CD8-positive, alpha-beta T cell (primary cell): ENCODE measurements at regions of chr7 and their contacts with region 1.

Region 1: DNA sequence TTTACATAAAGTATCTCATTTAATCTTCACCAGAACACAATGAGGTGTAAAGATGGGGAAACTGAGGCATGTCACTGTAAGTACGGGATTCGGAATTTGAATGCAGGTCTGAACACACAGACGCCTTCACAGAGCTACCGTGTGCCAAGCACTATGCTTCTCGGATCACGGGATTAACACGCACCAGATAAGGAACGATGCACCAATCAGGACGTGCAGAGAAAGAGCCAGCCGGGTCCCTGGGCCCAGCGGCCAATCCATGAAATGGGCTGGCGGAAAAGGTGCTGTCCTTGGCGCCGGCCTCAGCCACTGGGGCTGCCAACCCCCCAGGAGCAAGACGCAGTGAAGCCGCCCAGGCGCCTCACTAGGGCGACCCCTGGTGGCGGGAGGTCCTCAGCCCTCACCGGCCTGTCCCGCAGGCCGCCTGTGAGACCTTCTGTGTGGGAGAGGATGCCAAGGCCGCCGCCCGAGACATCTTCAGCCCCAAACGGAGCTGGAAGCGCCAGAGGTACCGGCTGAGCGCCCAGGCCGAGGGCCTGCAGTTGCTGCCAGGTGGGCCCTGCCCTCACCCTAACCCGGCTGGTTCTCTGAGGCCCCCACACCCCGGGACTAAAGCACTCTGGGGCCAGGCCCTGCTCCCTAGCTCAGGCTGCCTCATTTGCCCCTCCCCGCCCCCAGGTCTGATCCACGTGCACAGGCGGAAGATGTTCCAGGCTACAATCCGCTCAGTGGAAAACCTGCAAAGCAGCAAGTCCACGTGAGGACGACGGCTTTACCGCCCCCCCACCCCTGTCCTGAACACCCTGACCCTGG is 15.6 kb downstream of the ATG9B start:
- DNase-seq: peak; percentile 56 to 89 (median 78)
- ATAC-seq: peak; percentile 47
- H3K4me3 ChIP-seq: peak overlapping the region; percentile 31 to 46
- H3K4me3 Mint-ChIP-seq: peak overlapping the region; percentile 82
- H3K27ac ChIP-seq: peak overlapping the region; percentile 40 to 68
- H3K27ac Mint-ChIP-seq: peak overlapping the region; percentile 90
- H3K4me1 ChIP-seq: peaks cover 68% of the 10 kb centered on the region
- H3K4me1 Mint-ChIP-seq: peaks cover 61% of the 10 kb centered on the region
- H3K27me3 ChIP-seq: no peaks in the 10 kb centered on the region
- H3K27me3 Mint-ChIP-seq: no peaks in the 10 kb centered on the region
- CTCF ChIP-seq: peak; percentile 68

Region 2: GRCh38 chr7:150962553-150963399 is 45.9 kb before region 1 on chr7:
- CTCF ChIA-PET with region 1: interaction called, 29 read pairs
- POLR2A ChIA-PET with region 1: no interaction called
- intact Hi-C with region 1: no loop called
- DNase-seq: peak in 8 of 9 experiments; percentile 40 to 76 (median 66)
- ATAC-seq: peak; percentile 96
- H3K4me3 ChIP-seq: no peak overlapping the region
- H3K4me3 Mint-ChIP-seq: no peak overlapping the region
- H3K27ac ChIP-seq: no peak overlapping the region
- H3K27ac Mint-ChIP-seq: no peak overlapping the region
- H3K4me1 ChIP-seq: peaks cover 5% of the 10 kb centered on the region
- H3K4me1 Mint-ChIP-seq: peaks cover 6% of the 10 kb centered on the region
- H3K27me3 ChIP-seq: peaks cover 6 to 9% of the 10 kb centered on the region in 2 experiments
- H3K27me3 Mint-ChIP-seq: peaks cover 24% of the 10 kb centered on the region
- CTCF ChIP-seq: peak; percentile 86

Region 3: DNA sequence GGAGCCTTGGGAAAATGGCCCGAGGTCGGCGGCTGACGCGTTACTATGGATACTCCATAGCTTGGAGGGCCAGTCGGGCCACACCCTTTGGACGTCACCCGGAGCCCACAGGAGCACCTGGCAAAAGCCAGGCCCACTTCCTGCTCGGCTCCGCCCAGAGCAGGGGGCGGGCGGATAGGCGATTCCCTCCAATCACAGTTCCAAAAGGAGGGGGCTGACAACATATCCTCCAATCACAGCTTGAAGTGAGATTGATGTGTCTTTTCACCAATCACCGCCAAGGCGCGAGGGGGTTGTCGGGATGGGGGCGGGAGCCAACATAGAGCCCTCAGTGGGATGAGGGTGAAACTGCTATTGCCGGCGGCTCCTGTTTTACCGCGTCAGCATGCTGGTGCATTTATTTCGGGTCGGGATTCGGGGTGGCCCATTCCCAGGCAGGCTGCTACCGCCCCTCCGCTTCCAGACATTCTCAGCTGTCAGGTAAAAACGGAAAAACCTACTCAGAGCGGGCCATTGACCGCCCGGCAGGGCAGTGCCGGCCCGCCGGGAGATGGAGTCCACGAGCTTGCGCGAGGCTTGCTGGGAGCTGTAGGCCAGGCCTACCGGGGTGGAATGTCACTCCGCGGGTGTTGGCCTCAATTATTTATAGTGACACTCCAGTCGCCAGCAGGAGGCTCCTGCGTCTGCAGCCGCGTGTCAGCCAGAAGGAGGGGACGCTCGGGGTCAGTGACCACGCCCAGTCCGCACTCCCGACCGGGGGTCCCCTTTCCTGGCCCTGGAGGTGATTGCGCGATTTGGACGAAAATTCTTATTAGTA is 19.6 kb after region 1 on chr7 and contains the start of gene ABCB8:
- CTCF ChIA-PET with region 1: interaction called, 4 read pairs
- POLR2A ChIA-PET with region 1: interaction called, 24 read pairs
- intact Hi-C with region 1: loop called (anchors 1 kb)
- DNase-seq: peak; percentile 93 to 99 (median 98)
- ATAC-seq: peak; percentile 92
- H3K4me3 ChIP-seq: peak within 1 kb of the TSS; percentile 67 to 75
- H3K4me3 Mint-ChIP-seq: peak within 1 kb of the TSS; percentile 96
- H3K27ac ChIP-seq: peak within 1 kb of the TSS; percentile 94 to 96
- H3K27ac Mint-ChIP-seq: peak within 1 kb of the TSS; percentile 99
- H3K4me1 ChIP-seq: peaks cover 12% of the 10 kb centered on the region
- H3K4me1 Mint-ChIP-seq: peaks cover 24% of the 10 kb centered on the region
- H3K27me3 ChIP-seq: no peaks in the 10 kb centered on the region
- H3K27me3 Mint-ChIP-seq: no peaks in the 10 kb centered on the region
- CTCF ChIP-seq: peak; percentile 35
- total RNA-seq, gene ABCB8: 43.6 to 49.3 TPM

Region 4: DNA sequence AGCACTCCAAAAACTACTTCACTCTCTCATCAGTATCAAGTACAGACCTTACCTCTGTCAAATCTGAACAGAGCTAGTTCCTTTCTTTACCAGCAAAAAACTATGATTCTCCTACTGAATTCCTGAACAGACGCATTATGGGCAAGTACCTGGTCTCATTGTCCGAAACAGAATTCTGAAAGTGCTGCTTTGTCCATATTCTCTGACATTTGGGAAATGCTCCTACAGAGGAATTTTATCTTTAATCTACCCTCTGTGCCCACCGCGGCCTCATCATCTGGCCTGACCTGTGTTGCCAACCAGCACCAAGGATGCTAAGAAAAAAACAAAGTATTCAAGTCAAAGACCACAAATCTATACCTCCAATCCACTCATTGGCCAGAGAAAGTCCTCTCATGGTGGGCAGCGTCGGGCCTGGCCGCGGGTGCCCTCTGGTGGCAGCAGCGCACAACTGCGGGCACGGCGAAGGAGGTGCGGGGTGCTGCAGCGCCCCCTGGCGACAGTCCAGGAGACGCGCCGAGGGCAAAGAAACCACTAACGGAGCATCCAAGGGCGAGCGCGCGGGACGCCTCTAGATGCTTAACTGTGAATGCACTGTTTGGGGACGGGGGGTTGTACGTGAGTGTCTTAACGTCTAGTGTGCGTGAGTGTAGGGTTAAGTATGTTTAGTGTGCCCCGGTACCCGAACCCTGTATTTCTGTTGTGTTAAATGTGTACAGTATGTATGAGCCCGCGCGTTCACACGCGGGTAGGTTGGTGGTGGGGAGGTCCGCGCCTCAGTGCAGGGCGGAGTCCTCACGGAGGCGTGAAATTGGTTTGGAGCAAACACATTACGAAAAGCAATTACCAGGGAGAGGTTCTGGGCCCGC is 163.8 kb after region 1 on chr7:
- CTCF ChIA-PET with region 1: no interaction called
- POLR2A ChIA-PET with region 1: no interaction called
- intact Hi-C with region 1: no loop called
- DNase-seq: peak; percentile 52 to 88 (median 78)
- ATAC-seq: peak; percentile 87
- H3K4me3 ChIP-seq: no peak overlapping the region
- H3K4me3 Mint-ChIP-seq: no peak overlapping the region
- H3K27ac ChIP-seq: no peak overlapping the region
- H3K27ac Mint-ChIP-seq: no peak overlapping the region
- H3K4me1 ChIP-seq: peaks cover 5% of the 10 kb centered on the region
- H3K4me1 Mint-ChIP-seq: peaks cover 10% of the 10 kb centered on the region
- H3K27me3 ChIP-seq: peaks cover 0 to 12% of the 10 kb centered on the region in 2 experiments
- H3K27me3 Mint-ChIP-seq: peaks cover 62% of the 10 kb centered on the region
- CTCF ChIP-seq: peak; percentile 100